ENCODE measurements at regions of chrX and their contacts with region 1.

Region 1: GRCh38 chrX:17046478-17047097 is 100.1 kb downstream of the REPS2 start:
- H3K4me3 ChIP-seq: no peak overlapping the region
- H3K27ac ChIP-seq: no peak overlapping the region
- H3K4me1 ChIP-seq: no peaks in the 10 kb centered on the region
- CTCF ChIP-seq: peak; percentile 67

Region 2: GRCh38 chrX:16826207-16826606 is 220.4 kb before region 1 on chrX:
- CTCF ChIA-PET with region 1: interaction called, 32 read pairs
- POLR2A ChIA-PET with region 1: no interaction called
- H3K4me3 ChIP-seq: no peak overlapping the region
- H3K27ac ChIP-seq: no peak overlapping the region
- H3K4me1 ChIP-seq: peaks cover 13% of the 10 kb centered on the region
- CTCF ChIP-seq: no peak; the same call in 1 of the 2 replicates

Region 3: GRCh38 chrX:16882702-16883486 is 163.7 kb before region 1 on chrX:
- CTCF ChIA-PET with region 1: interaction called, 192 read pairs
- POLR2A ChIA-PET with region 1: no interaction called
- H3K4me3 ChIP-seq: peak overlapping the region; percentile 48
- H3K27ac ChIP-seq: no peak overlapping the region
- H3K4me1 ChIP-seq: no peaks in the 10 kb centered on the region
- CTCF ChIP-seq: peak; percentile 22; the same call in 1 of the 2 replicates

Region 4: DNA sequence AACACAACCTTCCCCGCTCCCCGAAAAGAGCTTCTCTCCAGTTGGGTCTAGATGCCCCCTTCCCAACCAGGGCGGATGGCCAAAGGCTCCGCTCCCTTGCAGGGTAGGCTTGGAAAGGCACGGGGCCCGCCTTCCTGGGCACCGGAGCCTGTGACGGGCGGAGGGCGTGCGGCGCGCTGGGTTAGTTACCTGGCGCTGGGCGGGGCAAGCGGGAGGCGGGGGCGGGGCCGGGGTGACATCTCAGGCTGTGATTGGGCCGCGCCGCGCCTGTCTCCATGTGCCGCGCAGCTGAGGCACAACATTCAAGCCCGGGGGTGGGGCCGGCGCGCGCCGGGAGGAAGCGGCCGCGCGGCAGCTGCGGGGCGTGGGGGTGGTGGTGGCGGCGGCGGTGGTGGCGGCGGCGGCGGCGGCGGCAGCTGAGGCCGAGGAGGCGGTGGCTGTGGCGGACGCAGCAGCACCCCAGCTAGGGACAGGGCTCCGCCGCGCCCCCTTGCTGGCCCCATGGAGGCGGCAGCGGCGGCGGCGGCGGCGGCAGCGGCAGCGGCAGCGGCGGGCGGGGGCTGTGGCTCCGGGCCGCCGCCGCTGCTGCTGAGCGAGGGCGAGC is 100.1 kb before region 1 on chrX and contains the start of gene REPS2:
- CTCF ChIA-PET with region 1: interaction called, 13 read pairs
- POLR2A ChIA-PET with region 1: no interaction called
- H3K4me3 ChIP-seq: peak within 1 kb of the TSS; percentile 62
- H3K27ac ChIP-seq: peak within 1 kb of the TSS; percentile 41; the same call in 1 of the 2 replicates
- H3K4me1 ChIP-seq: no peaks in the 10 kb centered on the region
- CTCF ChIP-seq: no peak

Region 5: DNA sequence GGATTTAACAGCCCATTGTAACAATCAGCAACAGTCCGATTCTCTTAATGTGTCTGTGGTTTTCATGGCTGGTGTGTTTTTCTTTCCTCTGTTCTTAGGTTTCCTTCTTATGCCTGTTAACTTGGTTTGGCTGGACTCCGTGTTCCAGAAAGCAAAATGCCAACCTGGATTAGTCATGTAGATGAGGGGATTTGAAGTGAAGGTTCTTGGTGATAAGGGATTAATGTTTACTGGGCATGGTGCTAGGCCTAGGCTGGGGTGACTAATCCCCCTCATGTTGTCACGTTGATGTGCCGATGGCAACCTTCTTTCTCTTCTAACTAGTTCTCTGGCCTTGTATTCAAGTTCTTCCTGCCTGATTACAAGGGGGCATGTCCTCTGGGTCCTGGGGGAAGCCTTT is 14.2 kb before region 1 on chrX:
- CTCF ChIA-PET with region 1: interaction called, 23 read pairs
- POLR2A ChIA-PET with region 1: no interaction called
- H3K4me3 ChIP-seq: no peak overlapping the region
- H3K27ac ChIP-seq: no peak overlapping the region
- H3K4me1 ChIP-seq: 0 out of 2 replicates have a peak, but pooled peaks cover 3% of the 10 kb centered on the region
- CTCF ChIP-seq: no peak

Region 6: DNA sequence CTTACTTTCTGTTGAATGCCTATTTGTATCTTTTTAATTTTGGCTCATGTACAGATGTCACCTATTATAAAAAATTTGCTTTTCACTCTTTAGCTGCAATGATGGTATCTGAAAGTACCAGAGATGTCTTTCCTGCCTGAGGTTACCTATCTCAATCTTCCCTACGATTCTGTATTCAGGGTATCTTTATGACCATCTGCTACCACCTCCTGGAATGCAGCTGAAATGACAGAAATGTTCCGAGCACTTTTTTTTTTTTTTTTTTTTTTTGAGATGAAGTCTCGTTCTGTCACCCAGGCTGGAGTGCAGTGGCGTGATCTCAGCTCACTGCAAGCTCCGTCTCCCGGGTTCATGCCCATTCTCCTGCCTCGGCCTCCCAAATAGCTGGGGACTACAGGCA is 36.2 kb after region 1 on chrX:
- CTCF ChIA-PET with region 1: interaction called, 25 read pairs
- POLR2A ChIA-PET with region 1: no interaction called
- H3K4me3 ChIP-seq: no peak overlapping the region
- H3K27ac ChIP-seq: no peak overlapping the region
- H3K4me1 ChIP-seq: no peaks in the 10 kb centered on the region
- CTCF ChIP-seq: peak; percentile 43; the same call in 1 of the 2 replicates